ENCODE measurements at regions of chr2 and their contacts with region 1.

Region 1: DNA sequence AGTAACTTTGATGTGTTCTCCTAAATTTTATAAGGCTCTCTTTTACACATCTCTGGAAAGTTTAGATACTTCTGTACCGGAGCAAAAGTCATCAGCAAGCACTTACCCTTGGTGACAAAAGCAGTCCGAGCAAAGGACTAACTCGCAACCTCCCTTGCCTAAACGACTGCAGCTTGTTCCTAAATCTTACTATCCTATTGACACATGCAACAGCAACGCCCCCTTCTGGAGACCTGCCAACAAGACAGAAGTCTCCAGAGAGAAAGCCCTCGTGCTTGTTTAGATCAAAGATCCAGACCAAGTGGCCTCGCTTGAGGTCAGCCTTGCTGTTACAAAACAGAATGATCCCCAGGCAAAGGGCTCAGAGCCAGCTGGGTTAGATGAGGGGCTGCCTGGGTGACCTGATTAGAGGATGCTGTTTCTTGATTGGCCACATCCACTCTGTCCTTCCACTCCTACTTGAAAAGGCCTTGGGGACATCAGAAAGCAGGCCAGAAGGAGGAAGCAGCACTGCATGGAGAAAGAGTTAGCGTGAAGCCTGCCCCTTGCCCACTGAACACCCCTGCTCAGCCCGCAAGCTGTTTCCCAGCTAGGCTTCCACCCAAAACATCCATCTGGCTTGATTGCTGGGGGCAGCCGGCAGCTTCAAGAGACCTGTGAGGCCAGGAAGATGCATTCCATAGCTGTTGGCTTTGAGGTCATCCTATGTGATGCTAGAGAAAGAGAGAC is 94.3 kb downstream of the HNRNPLL start:
- DNase-seq: peak; percentile 87
- H3K4me3 Mint-ChIP-seq: no peak overlapping the region
- H3K27ac Mint-ChIP-seq: no peak overlapping the region
- H3K4me1 Mint-ChIP-seq: peaks cover 13% of the 10 kb centered on the region
- H3K27me3 Mint-ChIP-seq: peaks cover 50% of the 10 kb centered on the region

Region 2: GRCh38 chr2:38274286-38275276 is 233.9 kb before region 1 on chr2:
- CTCF ChIA-PET with region 1: interaction called, 11 read pairs
- DNase-seq: peak; percentile 42
- H3K4me3 Mint-ChIP-seq: no peak overlapping the region
- H3K27ac Mint-ChIP-seq: no peak overlapping the region
- H3K4me1 Mint-ChIP-seq: no peaks in the 10 kb centered on the region
- H3K27me3 Mint-ChIP-seq: no peaks in the 10 kb centered on the region

Region 3: DNA sequence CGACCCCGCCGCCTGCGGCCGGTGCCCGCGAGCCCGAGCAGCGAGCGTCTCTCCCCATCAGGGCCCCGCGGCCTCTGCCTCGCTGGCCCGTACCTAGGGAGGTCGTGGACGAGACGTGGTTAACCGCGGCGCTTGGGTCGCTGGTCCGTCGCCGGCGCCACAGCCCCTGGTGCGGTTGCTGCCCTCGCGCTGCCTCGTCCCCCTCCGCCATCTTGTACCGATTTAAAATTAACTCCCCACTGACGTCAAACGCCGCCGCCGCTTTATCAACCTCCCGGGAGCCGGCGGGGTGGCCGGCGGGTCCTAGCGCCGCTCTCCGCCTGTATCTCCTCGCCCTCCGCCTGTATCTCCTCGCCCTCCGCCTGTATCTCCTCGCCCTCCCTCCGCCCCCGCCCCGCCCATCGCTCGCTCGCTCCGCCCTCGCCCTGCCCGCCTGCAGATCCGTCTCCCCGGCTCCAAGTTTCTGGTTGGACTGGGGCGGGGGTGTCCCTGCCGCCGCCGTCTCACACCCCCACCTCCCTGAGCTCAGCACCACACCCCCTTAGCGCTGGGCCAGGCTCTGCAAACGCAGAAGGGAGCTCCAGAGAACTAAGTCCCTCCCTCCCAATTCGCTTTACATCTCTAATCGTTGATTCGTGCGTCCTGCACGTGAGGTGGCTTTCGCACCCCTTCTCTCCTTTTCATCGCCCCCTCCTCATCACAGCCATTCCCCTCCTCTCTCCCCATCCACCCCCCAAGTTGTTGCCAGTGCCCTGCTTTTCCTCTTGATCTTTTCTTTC is 131.2 kb before region 1 on chr2 and contains the start of gene ATL2:
- CTCF ChIA-PET with region 1: interaction called, 25 read pairs
- DNase-seq: peak; percentile 97
- H3K4me3 Mint-ChIP-seq: peak within 1 kb of the TSS; percentile 91
- H3K27ac Mint-ChIP-seq: peak within 1 kb of the TSS; percentile 96
- H3K4me1 Mint-ChIP-seq: peaks cover 65% of the 10 kb centered on the region
- H3K27me3 Mint-ChIP-seq: no peaks in the 10 kb centered on the region

Measured in activated naive CD4-positive, alpha-beta T cell treated with anti-CD3 and anti-CD28 coated beads, Interleukin-2, amount 10 ng/mL, durations not matched to agents 7 days and 5 days (primary cell).